ENCODE measurements at regions of chr1 and their contacts with region 1.

Region 1: DNA sequence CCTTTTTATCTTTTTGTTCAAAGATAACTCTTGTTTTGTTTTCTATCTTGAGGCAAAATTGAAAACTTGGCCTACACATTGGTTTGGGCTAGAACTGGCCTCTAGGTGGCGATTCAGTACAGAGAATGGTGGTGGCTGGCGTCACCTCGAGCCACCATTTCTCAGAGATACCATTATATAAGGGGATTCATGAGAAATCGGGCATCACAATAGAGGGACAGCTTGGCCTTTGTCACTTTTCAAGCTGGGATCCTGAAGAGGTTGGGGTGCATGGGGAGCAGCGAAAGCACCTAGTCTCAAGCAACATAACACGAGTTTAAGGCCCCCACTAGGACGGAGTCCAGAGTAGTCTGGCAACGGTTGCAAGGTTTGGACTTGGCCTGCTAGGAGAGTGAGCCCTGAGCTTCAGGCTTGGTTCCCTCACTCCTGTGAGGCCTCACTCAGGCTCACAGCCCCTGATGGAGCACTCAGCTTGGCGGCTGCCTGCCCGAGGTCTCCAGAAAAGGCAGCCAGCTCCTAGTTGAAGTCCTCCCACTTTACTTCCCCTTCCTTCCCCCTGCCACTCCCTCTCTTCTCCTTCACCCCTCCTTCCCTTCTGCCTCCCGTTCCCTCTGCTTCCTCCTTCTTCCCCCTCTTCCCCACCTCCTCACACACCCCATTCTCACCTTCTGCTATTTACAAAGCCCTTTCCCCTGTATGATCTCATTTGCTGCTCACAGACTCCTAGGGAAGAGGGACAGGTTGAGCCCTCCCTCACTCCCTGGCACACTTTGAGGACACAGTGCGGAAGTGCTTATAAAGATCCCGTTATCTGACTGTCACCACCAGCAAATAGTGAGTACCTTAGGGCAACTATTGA is 67.8 kb downstream of the LRIG2 start:
- ATAC-seq: peak; percentile 56 to 99 (median 93)
- H3K4me3 ChIP-seq: no peak overlapping the region
- H3K27ac ChIP-seq: no peak overlapping the region
- H3K4me1 ChIP-seq: peaks cover 3% of the 10 kb centered on the region in 2 donors

Region 2: GRCh38 chr1:112882271-112882744 is 258.5 kb before region 1 on chr1:
- in situ Hi-C with region 1: no loop called
- ATAC-seq: peak in 3 of 8 experiments; percentile 39 to 70 (median 46)
- H3K4me3 ChIP-seq: no peak overlapping the region
- H3K27ac ChIP-seq: no peak overlapping the region
- H3K4me1 ChIP-seq: peaks cover 3 to 5% of the 10 kb centered on the region in 2 donors

Region 3: GRCh38 chr1:113233441-113233840 is 92.6 kb after region 1 on chr1:
- in situ Hi-C with region 1: no loop called
- ATAC-seq: no peak
- H3K4me3 ChIP-seq: no peak overlapping the region
- H3K27ac ChIP-seq: no peak overlapping the region
- H3K4me1 ChIP-seq: no peaks in the 10 kb centered on the region

Region 4: GRCh38 chr1:113452921-113453770 is 312.3 kb after region 1 on chr1:
- in situ Hi-C with region 1: loop called in 1 of 9 experiments (anchors 25 kb)
- ATAC-seq: peak in 3 of 8 experiments; percentile 40 to 75 (median 56)
- H3K4me3 ChIP-seq: no peak overlapping the region
- H3K27ac ChIP-seq: no peak overlapping the region
- H3K4me1 ChIP-seq: no peaks in the 10 kb centered on the region

Region 5: GRCh38 chr1:113660088-113660487 is 519.3 kb after region 1 on chr1:
- in situ Hi-C with region 1: loop called in 1 of 9 experiments (anchors 25 kb)
- ATAC-seq: peak in 6 of 8 experiments; percentile 25 to 68 (median 56)
- H3K4me3 ChIP-seq: no peak overlapping the region
- H3K27ac ChIP-seq: peak overlapping the region in 1 of 2 donors; percentile 46
- H3K4me1 ChIP-seq: peaks cover 11 to 14% of the 10 kb centered on the region in 2 donors

Region 6: DNA sequence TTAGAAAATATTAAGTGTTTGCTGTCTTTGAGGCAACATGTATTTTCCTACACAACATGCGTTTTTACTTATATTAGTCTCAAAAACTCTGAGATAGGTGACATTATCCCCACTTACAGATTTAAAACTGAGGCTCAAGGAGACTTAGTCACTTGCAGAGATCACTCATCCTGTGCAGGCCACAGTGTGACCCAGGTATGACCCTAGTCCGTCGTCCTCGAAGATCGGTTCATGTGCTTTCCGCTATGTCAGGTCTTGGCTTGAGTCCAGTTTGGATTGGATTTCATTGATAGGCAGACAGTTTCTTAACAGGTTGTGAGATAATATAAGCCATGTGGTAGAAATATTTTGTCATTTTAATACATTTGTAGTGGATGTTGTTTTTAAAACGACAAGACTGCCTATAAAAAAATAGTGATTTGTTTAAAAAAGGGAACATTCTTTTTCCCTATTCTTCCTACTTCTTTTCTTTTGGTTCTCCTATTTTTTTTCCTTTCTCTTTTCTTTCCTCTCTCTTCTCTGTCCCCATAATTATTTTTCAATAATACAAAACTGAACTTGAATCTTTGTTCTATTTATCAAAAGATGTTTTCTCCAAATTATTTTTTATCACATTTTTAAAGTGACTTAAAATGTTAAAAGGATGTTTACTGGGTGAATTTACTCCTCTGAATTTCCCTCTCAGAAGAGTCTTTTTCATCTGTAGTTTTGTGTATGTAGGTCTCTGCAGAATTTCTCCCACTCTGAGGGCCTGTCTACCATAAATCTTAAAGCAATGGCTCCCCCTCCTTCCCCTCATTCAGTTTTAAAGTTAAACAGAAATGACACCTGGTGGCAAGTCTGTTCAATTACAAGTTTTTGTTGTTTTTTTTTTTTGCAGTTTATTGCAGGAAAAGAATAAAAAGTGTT is 536.7 kb after region 1 on chr1:
- in situ Hi-C with region 1: loop called in 8 of 9 experiments (anchors 10 to 25 kb)
- ATAC-seq: peak in 6 of 8 experiments; percentile 41 to 74 (median 64)
- H3K4me3 ChIP-seq: no peak overlapping the region
- H3K27ac ChIP-seq: no peak overlapping the region
- H3K4me1 ChIP-seq: peaks cover 0 to 3% of the 10 kb centered on the region in 2 donors

Region 7: DNA sequence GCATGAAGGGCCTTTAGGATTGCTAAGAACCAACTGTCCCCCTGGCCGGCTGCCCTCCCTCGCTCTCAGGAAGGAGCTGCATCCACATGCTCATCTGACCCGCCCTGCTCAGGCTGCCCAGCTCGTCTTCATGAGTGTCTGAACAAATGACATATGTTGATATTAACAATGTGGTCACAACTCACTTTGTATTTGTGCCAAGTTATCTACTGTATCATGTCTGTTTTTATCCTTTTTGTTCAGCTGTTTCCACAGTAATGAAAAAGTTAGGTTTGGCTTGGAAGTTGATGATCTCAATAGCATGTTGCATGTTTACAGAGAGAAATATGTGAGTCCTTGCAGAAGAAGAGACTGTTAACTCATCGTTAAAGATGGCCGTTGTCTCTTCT is 543.3 kb after region 1 on chr1:
- in situ Hi-C with region 1: loop called in 7 of 9 experiments (anchors 10 to 25 kb)
- ATAC-seq: peak in 4 of 8 experiments; percentile 40 to 99 (median 91)
- H3K4me3 ChIP-seq: no peak overlapping the region
- H3K27ac ChIP-seq: no peak overlapping the region
- H3K4me1 ChIP-seq: no peaks in the 10 kb centered on the region